ENCODE measurements at regions of chr17 and their contacts with region 1.

Region 1: DNA sequence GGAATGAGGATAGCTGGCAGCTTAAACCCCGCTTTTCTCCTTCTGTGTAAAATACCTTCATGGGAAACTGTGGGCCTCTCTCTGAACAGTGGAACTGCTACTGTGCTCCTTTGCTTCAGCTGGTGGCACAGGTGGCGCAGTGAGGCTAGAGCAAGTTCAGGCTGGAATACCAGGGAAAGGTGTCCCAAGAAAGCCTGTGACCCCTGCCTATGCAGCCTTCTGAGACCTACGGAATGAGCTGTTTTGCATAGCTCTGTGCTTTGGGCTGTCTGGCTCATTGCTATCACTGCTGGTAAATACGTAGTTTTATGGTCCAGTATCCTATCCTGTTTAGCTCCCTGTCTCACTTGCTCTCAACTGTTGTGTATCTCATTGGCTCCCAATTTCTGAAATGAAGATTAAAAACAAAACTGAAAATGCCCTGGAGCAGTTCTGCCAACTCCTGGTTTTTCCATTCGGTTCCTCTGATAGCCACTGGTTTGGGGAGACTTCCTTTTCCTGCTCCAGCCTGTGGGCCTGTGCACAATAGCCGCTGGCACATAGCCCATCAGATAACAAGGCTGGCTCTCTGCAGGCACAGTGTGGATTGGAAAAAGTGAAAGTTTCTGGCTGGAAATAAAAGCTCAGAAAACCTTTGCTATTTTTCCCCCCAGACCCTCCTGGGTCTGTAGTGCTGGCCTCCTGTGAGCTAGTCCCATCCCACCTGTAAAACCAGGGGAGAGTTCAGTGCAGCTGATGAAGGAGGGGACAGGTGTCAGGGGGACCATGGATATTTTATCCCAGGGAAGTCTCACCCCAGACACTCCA is 24.1 kb downstream of the LIMD2 start:
- DNase-seq: peak; percentile 73 to 79 (median 79)
- H3K4me3 ChIP-seq: peak overlapping the region in 4 of 7 experiments; percentile 6 to 64 (median 48)
- H3K27ac ChIP-seq: peak overlapping the region; percentile 27 to 62
- H3K4me1 ChIP-seq: peaks cover 27 to 40% (median 32%) of the 10 kb centered on the region in 4 experiments
- H3K27me3 ChIP-seq: no peaks in the 10 kb centered on the region

Region 2: GRCh38 chr17:63665527-63666214 is 10.1 kb before region 1 on chr17:
- CTCF ChIA-PET with region 1: interaction called, 37 read pairs
- POLR2A ChIA-PET with region 1: interaction called, 7 read pairs
- DNase-seq: peak; percentile 45 to 86 (median 77)
- H3K4me3 ChIP-seq: peak overlapping the region in 1 of 7 experiments; percentile 50
- H3K27ac ChIP-seq: peak overlapping the region; percentile 46 to 70
- H3K4me1 ChIP-seq: peaks cover 21 to 29% (median 26%) of the 10 kb centered on the region in 4 experiments
- H3K27me3 ChIP-seq: no peaks in the 10 kb centered on the region

Region 3: GRCh38 chr17:63689479-63689878 is 13.7 kb after region 1 on chr17:
- CTCF ChIA-PET with region 1: interaction called, 104 read pairs
- POLR2A ChIA-PET with region 1: interaction called, 4 read pairs
- DNase-seq: no peak
- H3K4me3 ChIP-seq: no peak overlapping the region
- H3K27ac ChIP-seq: no peak overlapping the region
- H3K4me1 ChIP-seq: peaks cover 0 to 8% (median 4%) of the 10 kb centered on the region in 4 experiments
- H3K27me3 ChIP-seq: no peaks in the 10 kb centered on the region

Measured in common myeloid progenitor, CD34-positive (primary cell).